ENCODE measurements at regions of chr11 and their contacts with region 1.

Region 1: GRCh38 chr11:67409261-67409666 is 5.4 kb downstream of the TBC1D10C start:
- DNase-seq: peak; percentile 75
- CTCF ChIP-seq: no peak

Region 2: DNA sequence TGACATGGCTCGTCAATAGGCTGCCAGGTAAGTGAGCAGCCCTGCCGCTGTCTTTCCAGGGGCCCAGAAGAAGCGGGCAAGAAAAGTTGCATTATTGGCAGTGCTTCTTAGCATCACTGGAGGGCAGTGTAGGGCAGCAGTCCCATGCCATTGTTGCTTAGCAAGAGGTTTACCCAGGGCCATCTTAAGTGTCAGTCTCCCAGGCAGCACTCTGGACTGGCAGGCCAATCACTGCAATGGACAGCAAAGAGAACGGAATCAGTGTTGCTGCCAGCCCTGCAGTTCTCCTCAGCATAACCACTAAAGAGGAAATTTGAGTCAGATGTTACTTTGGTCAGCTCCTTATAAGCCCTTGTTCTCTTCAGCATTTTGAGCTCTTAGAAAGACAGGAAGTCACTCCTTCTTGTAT is 156.4 kb before region 1 on chr11:
- CTCF ChIA-PET with region 1: no interaction called
- POLR2A ChIA-PET with region 1: no interaction called
- DNase-seq: no peak
- CTCF ChIP-seq: peak; percentile 23

Region 3: GRCh38 chr11:67420646-67421420 is 11.6 kb after region 1 on chr11:
- CTCF ChIA-PET with region 1: interaction called, 50 read pairs
- POLR2A ChIA-PET with region 1: interaction called, 3 read pairs
- DNase-seq: peak; percentile 99
- CTCF ChIP-seq: no peak

Region 4: GRCh38 chr11:67457453-67457852 is 48.2 kb after region 1 on chr11:
- CTCF ChIA-PET with region 1: no interaction called
- POLR2A ChIA-PET with region 1: no interaction called
- DNase-seq: no peak
- CTCF ChIP-seq: no peak

Region 5: GRCh38 chr11:67545280-67545679 is 136.0 kb after region 1 on chr11:
- CTCF ChIA-PET with region 1: no interaction called
- POLR2A ChIA-PET with region 1: no interaction called
- DNase-seq: no peak
- CTCF ChIP-seq: no peak